ENCODE measurements at regions of chr1 and their contacts with region 1.

Region 1: DNA sequence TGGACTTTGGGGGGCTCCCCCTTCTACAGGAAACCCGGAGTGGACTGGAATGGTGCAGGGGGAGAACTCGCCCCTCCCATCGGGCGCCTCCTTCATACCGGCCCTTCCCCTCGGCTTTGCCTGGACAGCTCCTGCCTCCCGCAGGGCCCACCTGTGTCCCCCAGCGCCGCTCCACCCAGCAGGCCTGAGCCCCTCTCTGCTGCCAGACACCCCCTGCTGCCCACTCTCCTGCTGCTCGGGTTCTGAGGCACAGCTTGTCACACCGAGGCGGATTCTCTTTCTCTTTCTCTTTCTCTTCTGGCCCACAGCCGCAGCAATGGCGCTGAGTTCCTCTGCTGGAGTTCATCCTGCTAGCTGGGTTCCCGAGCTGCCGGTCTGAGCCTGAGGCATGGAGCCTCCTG is at the start of gene TNFRSF14:
- DNase-seq: peak; percentile 49 to 80 (median 62)
- ATAC-seq: peak; percentile 25 to 55 (median 48)
- H3K4me3 ChIP-seq: peak within 1 kb of the TSS; percentile 28 to 83 (median 65)
- H3K27ac ChIP-seq: peak within 1 kb of the TSS; percentile 82 to 99 (median 91)
- H3K4me1 ChIP-seq: peaks cover 0 to 50% (median 29%) of the 10 kb centered on the region in 12 donors
- H3K27me3 ChIP-seq: peaks cover 0 to 5% (median 0%) of the 10 kb centered on the region in 9 donors
- CTCF ChIP-seq: peak in 1 of 12 donors; percentile 8
- POLR2A ChIP-seq: no peak
- total RNA-seq, gene TNFRSF14: 7.8 to 70.8 (median 14.3) TPM

Region 2: DNA sequence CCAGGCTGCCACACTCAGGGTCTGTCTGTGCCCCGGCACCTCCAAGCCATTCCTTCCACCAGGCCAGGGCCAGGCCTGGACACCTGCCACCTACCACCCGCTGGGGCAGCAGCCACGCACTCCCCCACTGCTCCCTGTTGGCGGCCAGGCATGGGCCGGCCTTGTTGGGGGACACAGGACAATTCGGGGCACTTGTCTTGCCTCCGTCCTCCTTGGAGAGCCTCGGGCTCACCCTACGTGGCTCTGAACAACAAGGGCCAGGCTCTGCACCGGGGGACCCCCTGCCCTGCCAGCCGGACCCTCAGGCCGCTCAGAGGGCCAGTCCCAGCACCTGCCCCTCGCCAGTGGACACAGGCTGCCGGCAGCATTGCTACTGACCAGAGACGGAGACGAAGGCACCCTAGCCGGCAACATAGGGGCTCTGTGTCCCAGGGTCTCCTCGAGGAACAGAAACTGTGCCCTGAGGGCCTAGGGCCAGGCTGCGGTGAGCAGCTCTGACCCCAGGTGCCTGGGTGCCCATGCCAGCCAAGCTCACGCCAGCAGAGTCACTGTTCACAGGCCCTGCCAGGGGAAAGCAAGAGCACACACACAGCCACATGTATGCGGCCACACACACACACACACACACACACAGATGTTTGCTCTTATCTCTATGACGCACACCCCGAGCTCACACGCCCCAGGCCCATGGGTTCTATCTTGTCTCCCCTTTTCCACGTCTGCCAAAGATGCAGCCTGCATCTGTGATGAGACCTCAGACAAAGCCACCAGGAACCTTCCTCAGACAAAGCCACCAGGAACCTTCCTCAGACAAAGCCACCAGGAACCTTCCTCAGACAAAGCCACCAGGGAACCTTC is 210.8 kb before region 1 on chr1:
- intact Hi-C with region 1: no loop called
- DNase-seq: peak in 3 of 5 donors; percentile 15 to 46 (median 24)
- ATAC-seq: peak in 1 of 4 donors; percentile 6
- H3K4me3 ChIP-seq: no peak overlapping the region
- H3K27ac ChIP-seq: no peak overlapping the region
- H3K4me1 ChIP-seq: no peaks in the 10 kb centered on the region
- H3K27me3 ChIP-seq: no peaks in the 10 kb centered on the region
- CTCF ChIP-seq: no peak
- POLR2A ChIP-seq: no peak

Region 3: GRCh38 chr1:2575801-2576663 is 19.8 kb after region 1 on chr1:
- intact Hi-C with region 1: loop called in 3 of 10 experiments (anchors 1 to 2 kb)
- DNase-seq: peak in 2 of 5 donors; percentile 22 to 66
- ATAC-seq: peak in 1 of 4 donors; percentile 20
- H3K4me3 ChIP-seq: peak overlapping the region in 2 of 12 donors; percentile 17 to 19
- H3K27ac ChIP-seq: peak overlapping the region; percentile 23 to 89 (median 80)
- H3K4me1 ChIP-seq: peaks cover 0 to 40% (median 22%) of the 10 kb centered on the region in 12 donors
- H3K27me3 ChIP-seq: peaks cover 0 to 7% (median 0%) of the 10 kb centered on the region in 9 donors
- CTCF ChIP-seq: no peak
- POLR2A ChIP-seq: no peak